Common myeloid progenitor, CD34-positive (primary cell): ENCODE measurements at regions of chr6 and their contacts with region 1.

Region 1: DNA sequence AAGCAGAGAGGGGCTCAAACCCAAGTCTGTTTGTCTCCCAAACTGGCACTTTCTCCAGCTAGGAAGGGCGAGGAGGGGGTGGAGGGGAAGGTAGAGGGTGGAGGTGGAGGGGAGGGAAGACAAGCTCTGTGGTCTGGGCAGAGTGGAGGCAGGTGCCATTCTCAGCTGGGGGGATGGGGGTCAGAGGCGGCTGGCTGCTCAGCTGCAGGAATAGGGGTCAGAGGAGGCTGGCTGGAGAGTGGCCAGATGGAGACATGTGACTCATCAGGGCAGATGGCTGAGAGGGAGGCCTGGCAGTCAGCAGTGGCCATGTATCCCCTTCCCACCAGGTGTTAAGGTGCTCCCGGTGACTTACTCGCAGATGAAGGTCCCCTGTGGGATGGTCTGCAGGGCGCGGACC is 3.5 kb upstream of the SLC44A4 start:
- DNase-seq: no peak
- H3K4me3 ChIP-seq: no peak overlapping the region
- H3K27ac ChIP-seq: no peak overlapping the region
- H3K4me1 ChIP-seq: no peaks in the 10 kb centered on the region
- H3K27me3 ChIP-seq: no peaks in the 10 kb centered on the region

Region 2: GRCh38 chr6:31862344-31863227 is 19.8 kb before region 1 on chr6 and contains the start of gene NEU1:
- CTCF ChIA-PET with region 1: interaction called, 14 read pairs
- POLR2A ChIA-PET with region 1: no interaction called
- DNase-seq: peak; percentile 100
- H3K4me3 ChIP-seq: peak within 1 kb of the TSS; percentile 69 to 96 (median 87)
- H3K27ac ChIP-seq: peak within 1 kb of the TSS; percentile 66 to 89
- H3K4me1 ChIP-seq: peaks cover 0 to 29% (median 19%) of the 10 kb centered on the region in 4 experiments
- H3K27me3 ChIP-seq: no peaks in the 10 kb centered on the region

Region 3: GRCh38 chr6:31870385-31870921 is 11.9 kb before region 1 on chr6:
- CTCF ChIA-PET with region 1: interaction called, 14 read pairs
- POLR2A ChIA-PET with region 1: no interaction called
- DNase-seq: peak in 1 of 3 donors; percentile 14
- H3K4me3 ChIP-seq: no peak overlapping the region
- H3K27ac ChIP-seq: no peak overlapping the region
- H3K4me1 ChIP-seq: no peaks in the 10 kb centered on the region
- H3K27me3 ChIP-seq: peaks cover 0 to 3% (median 0%) of the 10 kb centered on the region in 5 experiments